B cell (primary cell): ENCODE measurements at regions of chr10 and their contacts with region 1.

Region 1: DNA sequence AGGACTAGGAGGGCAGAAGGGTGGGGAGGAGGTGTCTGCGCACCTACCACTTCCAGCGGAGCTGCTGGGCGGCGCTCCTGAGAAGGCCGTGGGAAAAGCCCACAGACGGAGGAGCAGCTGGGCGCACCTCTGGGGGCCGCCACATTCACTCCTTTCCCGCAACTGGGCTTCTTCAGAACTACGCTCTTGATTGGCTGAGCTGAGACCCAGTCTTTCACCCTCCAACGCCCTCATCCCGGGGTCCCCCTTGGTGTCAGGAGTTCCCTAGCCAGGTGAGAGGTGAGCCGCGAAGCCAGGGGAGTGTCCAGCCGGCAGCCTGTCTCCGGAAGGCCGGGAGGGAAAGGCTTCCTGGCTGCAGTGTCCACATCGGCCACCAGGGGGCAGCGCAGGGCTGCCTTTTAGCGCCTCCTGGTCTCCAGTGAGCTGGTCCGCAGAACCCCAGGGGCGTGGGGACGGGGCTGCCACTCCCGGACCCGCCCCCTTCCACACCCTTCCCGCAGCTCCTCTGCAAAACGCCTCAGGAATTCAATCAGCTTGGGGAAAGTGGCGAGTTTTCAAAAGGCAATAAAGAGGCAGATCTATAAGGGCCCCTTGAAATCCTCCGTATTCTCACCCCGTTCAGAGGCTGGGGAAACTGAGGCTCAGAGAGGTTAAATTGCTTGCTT is 98.8 kb downstream of the CHST15 start:
- DNase-seq: peak; percentile 87
- ATAC-seq: peak; percentile 82
- H3K4me3 ChIP-seq: peak overlapping the region; percentile 2 to 65 (median 30)
- H3K4me3 Mint-ChIP-seq: peak overlapping the region; percentile 84
- H3K27ac ChIP-seq: no peak overlapping the region
- H3K27ac Mint-ChIP-seq: peak overlapping the region; percentile 55
- H3K4me1 ChIP-seq: peaks cover 29 to 36% of the 10 kb centered on the region in 2 donors
- H3K4me1 Mint-ChIP-seq: peaks cover 40% of the 10 kb centered on the region
- H3K27me3 ChIP-seq: peaks cover 0 to 34% (median 20%) of the 10 kb centered on the region in 4 experiments
- H3K27me3 Mint-ChIP-seq: peaks cover 38% of the 10 kb centered on the region
- CTCF ChIP-seq: peak; percentile 99

Region 2: DNA sequence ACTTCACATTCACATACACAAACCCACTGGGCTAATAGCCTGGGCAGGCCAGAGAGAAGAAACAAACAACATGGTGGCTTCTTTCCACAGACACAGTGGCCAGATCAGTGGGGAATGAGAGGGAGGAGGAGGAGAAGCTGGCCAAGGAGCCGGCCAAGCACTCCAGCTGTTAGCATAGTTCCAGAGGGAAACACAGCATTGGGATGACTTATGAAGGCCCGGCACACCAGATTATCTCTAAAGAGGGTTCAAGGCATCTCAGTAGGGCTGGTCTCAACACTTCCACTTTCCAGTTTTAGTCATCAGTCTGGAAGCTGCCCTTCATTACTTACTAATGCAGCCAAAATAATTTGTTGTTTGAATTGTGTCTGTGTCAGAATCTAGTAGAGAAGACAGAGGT is 370.5 kb before region 1 on chr10:
- CTCF ChIA-PET with region 1: no interaction called
- POLR2A ChIA-PET with region 1: no interaction called
- intact Hi-C with region 1: no loop called
- DNase-seq: no peak
- ATAC-seq: no peak
- H3K4me3 ChIP-seq: no peak overlapping the region
- H3K4me3 Mint-ChIP-seq: no peak overlapping the region
- H3K27ac ChIP-seq: no peak overlapping the region
- H3K27ac Mint-ChIP-seq: no peak overlapping the region
- H3K4me1 ChIP-seq: no peaks in the 10 kb centered on the region
- H3K4me1 Mint-ChIP-seq: no peaks in the 10 kb centered on the region
- H3K27me3 ChIP-seq: peaks cover 0 to 3% (median 0%) of the 10 kb centered on the region in 4 experiments
- H3K27me3 Mint-ChIP-seq: peaks cover 10% of the 10 kb centered on the region
- CTCF ChIP-seq: no peak

Region 3: DNA sequence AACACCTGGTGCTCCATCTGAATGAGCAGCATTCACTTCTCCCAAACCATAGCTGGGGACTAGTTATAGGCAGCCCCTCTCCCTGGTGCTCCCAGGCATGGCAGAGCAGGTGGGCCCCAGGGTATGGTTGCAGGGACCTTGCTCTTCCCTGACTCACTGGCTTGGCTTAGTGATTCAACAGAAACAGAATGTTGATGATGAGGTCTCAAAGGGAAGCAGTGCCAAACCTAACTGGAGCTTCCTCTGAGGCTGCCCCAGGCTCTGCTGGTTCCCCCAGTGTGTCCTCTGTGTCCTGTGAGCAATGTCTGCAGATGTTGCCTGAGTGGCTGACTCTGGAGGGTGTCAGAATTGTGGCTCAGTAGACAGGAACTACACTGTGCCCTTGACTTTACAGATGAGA is 324.6 kb before region 1 on chr10:
- CTCF ChIA-PET with region 1: no interaction called
- POLR2A ChIA-PET with region 1: no interaction called
- intact Hi-C with region 1: no loop called
- DNase-seq: no peak
- ATAC-seq: no peak
- H3K4me3 ChIP-seq: no peak overlapping the region
- H3K4me3 Mint-ChIP-seq: no peak overlapping the region
- H3K27ac ChIP-seq: no peak overlapping the region
- H3K27ac Mint-ChIP-seq: no peak overlapping the region
- H3K4me1 ChIP-seq: no peaks in the 10 kb centered on the region
- H3K4me1 Mint-ChIP-seq: no peaks in the 10 kb centered on the region
- H3K27me3 ChIP-seq: peaks cover 0 to 6% (median 0%) of the 10 kb centered on the region in 4 experiments
- H3K27me3 Mint-ChIP-seq: peaks cover 30% of the 10 kb centered on the region
- CTCF ChIP-seq: no peak

Region 4: GRCh38 chr10:123967396-123968243 is 26.9 kb before region 1 on chr10:
- CTCF ChIA-PET with region 1: no interaction called
- POLR2A ChIA-PET with region 1: no interaction called
- intact Hi-C with region 1: no loop called
- DNase-seq: peak; percentile 46
- ATAC-seq: no peak
- H3K4me3 ChIP-seq: no peak overlapping the region
- H3K4me3 Mint-ChIP-seq: no peak overlapping the region
- H3K27ac ChIP-seq: no peak overlapping the region
- H3K27ac Mint-ChIP-seq: no peak overlapping the region
- H3K4me1 ChIP-seq: peaks cover 3 to 8% of the 10 kb centered on the region in 2 donors
- H3K4me1 Mint-ChIP-seq: peaks cover 5% of the 10 kb centered on the region
- H3K27me3 ChIP-seq: peaks cover 0 to 68% (median 38%) of the 10 kb centered on the region in 4 experiments
- H3K27me3 Mint-ChIP-seq: peaks cover 80% of the 10 kb centered on the region
- CTCF ChIP-seq: peak; percentile 70

Region 5: DNA sequence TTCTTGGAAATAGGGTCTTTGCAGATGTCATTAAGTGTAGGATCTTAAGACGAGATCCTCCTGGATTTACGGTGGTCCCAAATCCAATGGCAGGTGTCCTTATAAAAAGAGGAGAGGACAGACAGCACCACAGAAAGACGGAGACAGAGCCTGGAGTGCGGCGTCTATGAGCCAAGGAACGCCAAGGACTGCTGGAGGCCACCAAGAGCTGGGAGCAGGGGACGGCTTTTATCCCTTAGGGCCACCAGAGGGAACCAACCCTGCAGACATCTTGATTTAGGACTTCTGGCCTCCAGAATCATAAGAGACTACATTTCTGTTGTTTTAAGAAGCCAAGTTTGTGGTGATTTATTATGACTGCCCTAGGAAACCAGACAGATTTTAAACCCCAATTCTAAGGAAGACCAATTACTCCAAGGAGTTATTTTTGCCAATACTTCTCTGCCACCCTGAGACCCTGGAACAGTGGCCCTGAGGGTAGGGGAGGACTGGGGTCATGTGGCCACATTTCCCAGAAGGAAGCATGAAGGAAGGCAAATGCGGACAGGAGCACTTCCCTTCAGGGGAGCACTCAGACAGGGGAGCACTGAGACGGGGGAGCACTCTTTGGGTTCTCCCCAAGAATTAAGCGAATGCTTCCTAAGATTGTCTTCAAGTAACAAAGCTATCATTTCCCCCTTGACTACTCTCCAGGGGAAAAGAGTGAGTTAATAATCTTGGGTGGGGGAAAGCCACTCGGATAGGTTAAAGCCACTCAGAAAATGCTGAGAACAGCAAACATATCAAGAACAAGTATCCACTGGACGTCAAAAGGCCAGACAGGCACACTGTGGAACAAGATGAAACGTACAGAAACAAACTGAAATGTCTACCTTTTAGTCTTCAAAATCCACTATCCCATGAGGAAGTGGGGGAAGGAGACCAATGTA is 31.4 kb after region 1 on chr10:
- CTCF ChIA-PET with region 1: interaction called, 45 read pairs
- POLR2A ChIA-PET with region 1: interaction called, 3 read pairs
- intact Hi-C with region 1: no loop called
- DNase-seq: peak; percentile 71
- ATAC-seq: peak; percentile 74
- H3K4me3 ChIP-seq: no peak overlapping the region
- H3K4me3 Mint-ChIP-seq: no peak overlapping the region
- H3K27ac ChIP-seq: no peak overlapping the region
- H3K27ac Mint-ChIP-seq: no peak overlapping the region
- H3K4me1 ChIP-seq: peaks cover 12 to 15% of the 10 kb centered on the region in 2 donors
- H3K4me1 Mint-ChIP-seq: peaks cover 14% of the 10 kb centered on the region
- H3K27me3 ChIP-seq: no peaks in the 10 kb centered on the region
- H3K27me3 Mint-ChIP-seq: no peaks in the 10 kb centered on the region
- CTCF ChIP-seq: peak; percentile 67

Region 6: DNA sequence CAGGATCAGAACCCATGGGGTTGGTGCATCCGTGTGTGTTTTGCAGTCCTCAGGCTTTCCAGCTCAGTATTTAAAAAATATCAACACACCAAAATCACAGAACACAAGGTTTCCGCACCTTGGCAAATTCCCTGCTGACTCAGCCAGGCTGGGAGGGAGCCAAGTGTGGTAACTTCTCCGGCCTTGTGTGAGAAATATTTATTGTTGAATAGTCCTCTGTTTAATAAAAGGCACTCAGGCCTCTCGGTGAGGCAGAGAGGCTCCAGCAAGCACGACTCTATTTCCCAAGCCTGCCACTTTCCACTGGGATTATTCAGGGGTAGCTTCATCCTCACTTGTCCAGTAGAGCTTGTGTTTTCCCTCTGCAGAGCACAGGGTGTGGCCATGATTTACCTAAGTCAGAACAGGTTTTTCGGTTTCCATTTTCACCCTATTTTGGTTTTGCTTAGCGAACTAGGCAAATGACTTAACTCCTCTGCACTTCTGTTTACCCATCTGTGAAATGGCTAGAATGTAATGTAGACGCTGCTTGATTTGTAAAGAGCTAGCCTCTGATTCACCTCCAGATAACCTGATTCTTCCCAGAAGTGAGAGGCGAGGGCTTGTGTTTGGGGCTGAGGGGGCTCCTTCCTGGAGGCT is 111.8 kb after region 1 on chr10:
- CTCF ChIA-PET with region 1: interaction called, 17 read pairs
- POLR2A ChIA-PET with region 1: no interaction called
- intact Hi-C with region 1: no loop called
- DNase-seq: peak; percentile 67
- ATAC-seq: peak; percentile 83
- H3K4me3 ChIP-seq: peak overlapping the region in 3 of 5 experiments; percentile 2 to 56 (median 21)
- H3K4me3 Mint-ChIP-seq: peak overlapping the region; percentile 78
- H3K27ac ChIP-seq: peak overlapping the region; percentile 45 to 54
- H3K27ac Mint-ChIP-seq: peak overlapping the region; percentile 92
- H3K4me1 ChIP-seq: peaks cover 70 to 81% of the 10 kb centered on the region in 2 donors
- H3K4me1 Mint-ChIP-seq: peaks cover 77% of the 10 kb centered on the region
- H3K27me3 ChIP-seq: peaks cover 0 to 2% (median 0%) of the 10 kb centered on the region in 4 experiments
- H3K27me3 Mint-ChIP-seq: no peaks in the 10 kb centered on the region
- CTCF ChIP-seq: no peak

Region 7: GRCh38 chr10:124221356-124222317 is 227.1 kb after region 1 on chr10:
- CTCF ChIA-PET with region 1: interaction called, 37 read pairs
- POLR2A ChIA-PET with region 1: interaction called, 7 read pairs
- intact Hi-C with region 1: loop called (anchors 1 kb)
- DNase-seq: peak; percentile 32
- ATAC-seq: peak; percentile 22
- H3K4me3 ChIP-seq: peak overlapping the region in 3 of 5 experiments; percentile 25 to 60 (median 35)
- H3K4me3 Mint-ChIP-seq: peak overlapping the region; percentile 79
- H3K27ac ChIP-seq: no peak overlapping the region
- H3K27ac Mint-ChIP-seq: peak overlapping the region; percentile 56
- H3K4me1 ChIP-seq: peaks cover 28 to 30% of the 10 kb centered on the region in 2 donors
- H3K4me1 Mint-ChIP-seq: peaks cover 33% of the 10 kb centered on the region
- H3K27me3 ChIP-seq: no peaks in the 10 kb centered on the region
- H3K27me3 Mint-ChIP-seq: no peaks in the 10 kb centered on the region
- CTCF ChIP-seq: no peak

Region 8: DNA sequence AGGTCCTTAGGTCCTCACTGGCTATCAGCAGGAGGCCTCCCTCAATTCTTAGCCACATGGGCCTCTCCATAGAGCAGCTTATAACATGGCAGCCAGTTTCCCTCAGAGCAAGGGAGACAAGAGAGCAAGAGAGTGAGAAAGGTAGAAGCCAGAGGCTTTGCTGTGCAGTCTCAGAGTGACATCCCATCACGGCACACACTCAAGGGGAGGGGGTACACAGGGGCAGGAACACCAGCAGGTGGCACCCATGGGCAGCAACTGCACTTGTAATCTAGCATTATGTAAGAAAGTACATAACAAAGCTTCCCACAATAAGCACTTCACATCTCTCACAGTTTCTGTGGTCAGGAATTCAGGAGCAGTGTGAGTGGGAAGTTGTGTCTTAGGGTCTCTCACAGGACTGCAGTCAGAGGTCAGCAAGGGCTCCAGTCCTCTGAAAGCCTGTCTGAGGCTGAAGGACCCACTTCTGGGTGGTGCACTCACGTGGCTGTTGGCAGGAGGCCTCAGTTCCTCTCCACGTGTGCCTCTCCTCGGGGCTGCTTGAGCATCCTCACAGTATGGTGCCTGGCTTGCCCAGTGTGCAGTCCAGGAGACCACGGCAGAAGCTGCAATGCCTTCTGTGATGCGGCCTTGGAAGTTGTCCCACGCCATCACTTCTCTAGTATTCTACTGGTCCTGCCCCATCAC is 264.7 kb after region 1 on chr10:
- CTCF ChIA-PET with region 1: interaction called, 115 read pairs
- POLR2A ChIA-PET with region 1: no interaction called
- intact Hi-C with region 1: no loop called
- DNase-seq: no peak
- ATAC-seq: no peak
- H3K4me3 ChIP-seq: no peak overlapping the region
- H3K4me3 Mint-ChIP-seq: no peak overlapping the region
- H3K27ac ChIP-seq: no peak overlapping the region
- H3K27ac Mint-ChIP-seq: no peak overlapping the region
- H3K4me1 ChIP-seq: no peaks in the 10 kb centered on the region
- H3K4me1 Mint-ChIP-seq: no peaks in the 10 kb centered on the region
- H3K27me3 ChIP-seq: no peaks in the 10 kb centered on the region
- H3K27me3 Mint-ChIP-seq: no peaks in the 10 kb centered on the region
- CTCF ChIP-seq: no peak

Region 9: GRCh38 chr10:124530215-124530665 is 535.7 kb after region 1 on chr10:
- CTCF ChIA-PET with region 1: interaction called, 9 read pairs
- POLR2A ChIA-PET with region 1: no interaction called
- intact Hi-C with region 1: loop called (anchors 5 kb)
- DNase-seq: peak; percentile 93
- ATAC-seq: peak; percentile 86
- H3K4me3 ChIP-seq: no peak overlapping the region
- H3K4me3 Mint-ChIP-seq: peak overlapping the region; percentile 74
- H3K27ac ChIP-seq: no peak overlapping the region
- H3K27ac Mint-ChIP-seq: peak overlapping the region; percentile 92
- H3K4me1 ChIP-seq: peaks cover 37 to 53% of the 10 kb centered on the region in 2 donors
- H3K4me1 Mint-ChIP-seq: peaks cover 50% of the 10 kb centered on the region
- H3K27me3 ChIP-seq: no peaks in the 10 kb centered on the region
- H3K27me3 Mint-ChIP-seq: no peaks in the 10 kb centered on the region
- CTCF ChIP-seq: peak; percentile 86